Activated CD4-positive, alpha-beta memory T cell treated with anti-CD3 and anti-CD28 coated beads for 36 hours (primary cell): ENCODE measurements at regions of chr2 and their contacts with region 1.

Region 1: DNA sequence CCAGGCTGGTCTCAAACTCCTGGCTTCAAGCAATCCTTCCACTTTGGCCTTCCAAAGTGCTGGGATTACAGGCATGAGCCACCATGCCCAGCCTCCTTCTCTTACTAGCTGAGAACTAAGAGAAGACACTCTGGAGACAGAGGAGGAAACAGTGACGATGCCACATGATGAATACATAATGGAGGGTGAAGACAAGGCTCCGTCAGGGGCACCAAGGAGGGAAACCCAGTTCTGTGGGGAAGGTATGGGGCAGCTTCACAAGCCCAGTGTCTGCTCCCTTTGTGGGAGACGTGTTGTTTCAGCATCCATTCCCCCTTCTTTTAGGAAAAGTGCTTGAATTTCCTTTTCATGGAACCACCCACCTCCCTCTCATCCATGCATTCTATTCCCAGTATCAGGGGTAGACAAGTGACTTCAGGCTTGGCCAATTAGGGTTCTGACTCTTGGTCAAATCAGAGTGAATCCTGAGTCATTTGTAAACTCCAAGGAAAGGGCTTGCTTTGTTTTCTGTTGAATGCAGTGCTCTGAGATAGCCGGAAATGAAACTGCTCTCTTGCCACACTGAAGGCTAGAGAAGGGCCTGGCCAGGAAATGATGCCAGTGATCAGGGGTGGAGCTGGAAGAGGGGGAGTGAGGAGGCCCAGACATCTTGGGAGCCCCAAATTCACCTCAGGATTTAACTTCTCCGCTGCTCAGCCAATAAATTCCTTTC is 23.7 kb downstream of the TMEM127 start:
- DNase-seq: peak; percentile 86
- H3K4me3 Mint-ChIP-seq: peak overlapping the region; percentile 28
- H3K27ac Mint-ChIP-seq: peak overlapping the region; percentile 94
- H3K4me1 Mint-ChIP-seq: peaks cover 47% of the 10 kb centered on the region
- H3K27me3 Mint-ChIP-seq: no peaks in the 10 kb centered on the region

Region 2: DNA sequence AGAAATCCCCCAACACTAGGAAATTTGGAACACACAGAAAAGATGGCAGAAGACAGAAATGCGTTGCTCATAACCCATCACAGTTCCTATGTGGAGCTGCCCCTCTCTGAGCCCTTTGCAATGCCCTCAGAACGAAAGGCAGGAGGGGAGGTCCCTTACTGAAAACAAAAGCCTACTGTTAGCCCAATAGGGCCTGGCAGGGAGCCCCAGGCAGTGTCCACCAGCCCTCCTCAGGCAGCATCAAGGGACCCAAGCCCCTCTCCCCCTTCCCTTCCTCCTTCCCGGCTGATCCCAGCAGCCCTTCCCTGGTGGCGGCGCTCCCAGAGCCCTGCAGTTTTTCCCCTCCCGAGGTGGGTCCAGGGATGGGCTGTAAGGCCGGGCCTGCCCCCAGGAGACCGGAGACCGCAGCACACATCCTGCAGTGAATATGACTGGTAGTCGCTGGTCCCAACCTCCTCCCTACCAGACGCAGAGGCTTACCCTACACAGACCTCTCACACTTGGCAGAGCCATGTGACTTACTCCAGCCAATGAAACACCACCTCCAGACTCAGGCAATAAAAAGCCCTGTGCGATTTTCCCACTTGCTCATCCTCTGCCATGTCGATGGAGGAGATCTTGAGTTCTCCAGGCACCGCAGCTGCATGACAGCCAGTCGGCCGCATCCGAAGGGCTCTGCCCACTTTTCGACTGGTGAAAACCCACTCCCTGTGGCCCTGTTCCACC is 77.4 kb before region 1 on chr2:
- CTCF ChIA-PET with region 1: no interaction called
- POLR2A ChIA-PET with region 1: no interaction called
- intact Hi-C with region 1: loop called (anchors 2 kb)
- DNase-seq: peak; percentile 90
- H3K4me3 Mint-ChIP-seq: peak overlapping the region; percentile 87
- H3K27ac Mint-ChIP-seq: peak overlapping the region; percentile 100
- H3K4me1 Mint-ChIP-seq: peaks cover 72% of the 10 kb centered on the region
- H3K27me3 Mint-ChIP-seq: no peaks in the 10 kb centered on the region

Region 3: GRCh38 chr2:96208143-96209010 is 33.7 kb before region 1 on chr2 and contains the start of gene STARD7:
- CTCF ChIA-PET with region 1: interaction called, 3 read pairs
- POLR2A ChIA-PET with region 1: interaction called, 24 read pairs
- intact Hi-C with region 1: loop called (anchors 1 kb)
- DNase-seq: peak; percentile 99
- H3K4me3 Mint-ChIP-seq: peak within 1 kb of the TSS; percentile 98
- H3K27ac Mint-ChIP-seq: peak within 1 kb of the TSS; percentile 92
- H3K4me1 Mint-ChIP-seq: peaks cover 53% of the 10 kb centered on the region
- H3K27me3 Mint-ChIP-seq: no peaks in the 10 kb centered on the region
- total RNA-seq, gene STARD7: 173 to 181 TPM